ENCODE measurements at regions of chr12 and their contacts with region 1.

Region 1: DNA sequence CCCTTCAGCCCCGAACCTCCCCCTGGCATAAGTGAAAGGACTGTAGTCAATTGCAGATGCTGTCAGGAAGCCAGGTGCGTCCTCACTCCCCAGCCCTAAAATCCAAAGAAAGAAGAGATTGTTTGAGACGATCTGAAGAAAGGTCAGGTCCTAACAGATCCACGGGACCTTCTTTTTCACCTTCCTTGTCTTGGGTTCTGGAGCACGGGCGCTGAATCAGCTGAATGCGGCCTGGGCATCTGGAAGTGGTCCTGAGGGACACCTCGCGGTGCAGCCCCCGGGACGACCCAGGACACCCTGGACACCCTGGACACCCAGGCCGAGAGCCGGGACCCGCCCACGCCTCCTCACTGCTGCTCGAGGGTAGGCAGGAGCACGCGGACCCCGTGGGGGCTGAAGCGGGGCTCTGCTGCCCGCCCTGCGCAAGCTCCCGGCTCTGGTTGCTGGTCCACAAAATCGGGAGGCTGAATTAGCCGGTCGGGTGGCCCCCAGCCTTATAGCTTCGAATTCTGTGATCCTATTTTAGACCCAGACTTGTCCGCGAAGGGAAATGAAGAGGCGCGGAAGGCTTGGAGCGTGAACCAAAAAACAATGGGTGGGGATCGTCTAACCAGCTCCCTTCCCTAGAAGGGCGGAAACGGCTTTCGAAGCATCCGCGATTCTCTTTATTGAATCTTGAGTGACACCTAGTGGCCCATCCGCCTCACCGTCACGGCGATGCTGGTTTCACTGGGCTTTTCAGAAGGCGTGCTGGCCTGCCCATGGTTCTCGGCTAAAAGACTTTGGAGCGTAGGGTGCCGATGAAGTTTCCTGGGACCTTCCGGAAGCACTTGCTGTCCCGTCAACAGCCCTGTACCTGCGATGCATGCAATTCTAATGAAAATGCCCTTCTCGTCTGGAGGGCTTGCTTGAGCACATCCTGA is 46.4 kb upstream of the PLXNC1 start:
- DNase-seq: peak; percentile 66 to 90
- ATAC-seq: peak; percentile 78 to 90
- H3K4me3 ChIP-seq: peak overlapping the region; percentile 61
- H3K27ac ChIP-seq: peak overlapping the region; percentile 77 to 85
- H3K4me1 ChIP-seq: peaks cover 28% of the 10 kb centered on the region; the same call in 2 of the 3 replicates
- CTCF ChIP-seq: peak; percentile 77
- EP300 ChIP-seq: no peak
- POLR2A ChIP-seq: no peak
- RAD21 ChIP-seq: peak; percentile 93

Region 2: GRCh38 chr12:93419388-93420034 is 682.5 kb before region 1 on chr12:
- CTCF ChIA-PET with region 1: interaction called, 25 read pairs
- POLR2A ChIA-PET with region 1: no interaction called
- DNase-seq: peak; percentile 58 to 59
- ATAC-seq: peak in 1 of 2 experiments; percentile 79; a peak in 3 of 6 replicates
- H3K4me3 ChIP-seq: no peak overlapping the region
- H3K27ac ChIP-seq: no peak overlapping the region
- H3K4me1 ChIP-seq: peaks cover 27% of the 10 kb centered on the region; the same call in 2 of the 3 replicates
- CTCF ChIP-seq: peak; percentile 73
- EP300 ChIP-seq: no peak
- POLR2A ChIP-seq: no peak
- RAD21 ChIP-seq: peak; percentile 41 to 50; a peak in 3 of 5 replicates

Region 3: GRCh38 chr12:93526786-93527428 is 575.1 kb before region 1 on chr12:
- CTCF ChIA-PET with region 1: interaction called, 75 read pairs
- POLR2A ChIA-PET with region 1: interaction called, 3 read pairs
- DNase-seq: peak; percentile 28 to 92
- ATAC-seq: peak; percentile 68 to 78; a peak in 5 of 6 replicates
- H3K4me3 ChIP-seq: no peak overlapping the region
- H3K27ac ChIP-seq: peak overlapping the region; percentile 56 to 74
- H3K4me1 ChIP-seq: peaks cover 40% of the 10 kb centered on the region
- CTCF ChIP-seq: no peak
- EP300 ChIP-seq: peak in 1 of 2 experiments; percentile 34; a peak in 1 of 5 replicates
- POLR2A ChIP-seq: no peak
- RAD21 ChIP-seq: 0 out of 5 replicates have a peak, but pooled peaks of 1 of the 2 experiments have one; percentile 7

Region 4: GRCh38 chr12:93591137-93591868 is 510.7 kb before region 1 on chr12:
- CTCF ChIA-PET with region 1: interaction called, 19 read pairs
- POLR2A ChIA-PET with region 1: interaction called, 7 read pairs
- DNase-seq: peak; percentile 80 to 82
- ATAC-seq: peak; percentile 94 to 97
- H3K4me3 ChIP-seq: peak overlapping the region; percentile 56
- H3K27ac ChIP-seq: peak overlapping the region; percentile 70 to 86
- H3K4me1 ChIP-seq: no peaks in the 10 kb centered on the region; the same call in 2 of the 3 replicates
- CTCF ChIP-seq: no peak
- EP300 ChIP-seq: no peak
- POLR2A ChIP-seq: peak; percentile 51
- RAD21 ChIP-seq: peak in 1 of 2 experiments; percentile 34; a peak in 1 of 5 replicates

Region 5: GRCh38 chr12:93748672-93749383 is 353.2 kb before region 1 on chr12:
- CTCF ChIA-PET with region 1: interaction called, 13 read pairs
- POLR2A ChIA-PET with region 1: no interaction called
- DNase-seq: no peak
- ATAC-seq: peak; percentile 19 to 43; a peak in 3 of 6 replicates
- H3K4me3 ChIP-seq: no peak overlapping the region
- H3K27ac ChIP-seq: no peak overlapping the region
- H3K4me1 ChIP-seq: no peaks in the 10 kb centered on the region
- CTCF ChIP-seq: no peak
- EP300 ChIP-seq: no peak
- POLR2A ChIP-seq: no peak
- RAD21 ChIP-seq: no peak

Region 6: DNA sequence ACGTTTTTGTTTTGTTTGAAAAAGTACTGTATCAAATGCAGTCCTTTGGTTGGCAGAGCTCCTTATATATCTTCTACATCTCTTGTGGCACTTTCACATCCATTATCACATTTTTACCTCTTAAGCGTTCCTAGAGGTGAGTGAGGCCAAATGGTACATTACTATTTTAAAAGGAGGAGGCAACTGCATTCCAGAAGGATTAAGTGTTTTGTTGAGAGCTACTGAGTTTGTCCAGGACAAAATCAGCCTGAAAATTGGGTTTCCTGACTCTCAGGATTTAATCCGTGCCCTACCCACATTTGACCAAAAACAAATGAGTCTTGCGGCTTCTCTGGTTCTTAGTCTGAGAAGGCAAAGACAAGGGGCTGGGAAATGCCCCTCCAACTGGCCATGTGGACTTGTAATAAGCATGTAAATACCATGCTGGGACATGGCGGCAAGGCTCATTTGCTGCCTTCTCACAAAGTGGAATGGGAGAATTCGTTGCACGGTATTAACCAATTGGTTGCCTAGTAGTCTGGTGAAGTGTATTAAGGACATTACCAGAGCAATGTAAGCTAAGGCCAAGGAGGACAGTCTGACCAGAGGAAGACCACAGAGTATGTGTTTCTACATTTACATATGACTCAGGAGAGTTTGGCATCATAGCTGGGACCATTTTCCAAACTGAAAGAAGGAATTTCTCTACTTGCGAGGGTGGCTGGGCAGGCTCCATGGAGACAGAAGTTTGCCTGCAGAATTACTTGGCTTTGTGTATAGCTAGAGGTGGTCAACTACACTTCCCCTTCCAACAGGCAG is 129.4 kb before region 1 on chr12:
- CTCF ChIA-PET with region 1: interaction called, 13 read pairs
- POLR2A ChIA-PET with region 1: no interaction called
- DNase-seq: no peak
- ATAC-seq: no peak
- H3K4me3 ChIP-seq: no peak overlapping the region
- H3K27ac ChIP-seq: no peak overlapping the region
- H3K4me1 ChIP-seq: no peaks in the 10 kb centered on the region
- CTCF ChIP-seq: no peak
- EP300 ChIP-seq: no peak
- POLR2A ChIP-seq: no peak
- RAD21 ChIP-seq: no peak

Measured in A549 (cell line).